Activated CD8-positive, alpha-beta memory T cell treated with anti-CD3 and anti-CD28 coated beads, Interleukin-2, amount 10 ng/mL, durations not matched to agents 7 days and 5 days (primary cell): ENCODE measurements at regions of chr14 and their contacts with region 1.

Region 1: DNA sequence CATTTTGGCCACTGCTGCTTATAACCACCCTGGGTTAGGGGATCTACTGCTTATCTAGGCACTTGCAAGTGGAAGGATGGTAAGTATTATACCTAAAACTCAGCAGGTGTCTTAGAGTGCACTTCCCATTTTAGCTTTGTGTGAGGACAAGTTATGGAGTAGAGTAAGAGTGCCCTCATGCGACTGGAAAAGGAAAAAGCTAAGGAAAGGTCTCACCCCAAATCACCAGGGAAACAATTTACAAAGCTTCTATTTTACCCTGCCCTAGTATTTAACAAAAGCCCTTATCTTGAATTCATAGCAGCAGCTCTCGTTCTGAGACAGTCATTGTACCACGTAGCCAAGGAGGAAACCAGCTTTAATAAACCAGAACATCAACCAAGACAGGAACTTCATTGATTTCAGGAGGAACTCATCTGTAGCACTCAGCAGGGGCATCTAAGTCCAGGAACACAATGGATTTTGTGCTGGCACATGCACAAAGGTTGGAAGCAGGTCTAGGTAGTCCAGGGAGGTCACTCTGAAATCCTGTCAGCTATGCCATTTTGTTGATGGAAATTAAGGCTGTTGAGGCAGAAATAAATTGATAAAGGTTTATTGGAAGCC is 2.9 kb downstream of the RDH12 start:
- DNase-seq: no peak
- ATAC-seq: peak; percentile 85
- H3K4me3 Mint-ChIP-seq: no peak overlapping the region
- H3K27ac Mint-ChIP-seq: no peak overlapping the region
- H3K4me1 Mint-ChIP-seq: peaks cover 3% of the 10 kb centered on the region
- H3K27me3 Mint-ChIP-seq: peaks cover 4% of the 10 kb centered on the region

Region 2: GRCh38 chr14:67426983-67427606 is 277.5 kb before region 1 on chr14:
- CTCF ChIA-PET with region 1: interaction called, 33 read pairs
- DNase-seq: peak; percentile 80
- ATAC-seq: peak; percentile 89
- H3K4me3 Mint-ChIP-seq: no peak overlapping the region
- H3K27ac Mint-ChIP-seq: no peak overlapping the region
- H3K4me1 Mint-ChIP-seq: peaks cover 9% of the 10 kb centered on the region
- H3K27me3 Mint-ChIP-seq: peaks cover 34% of the 10 kb centered on the region

Region 3: DNA sequence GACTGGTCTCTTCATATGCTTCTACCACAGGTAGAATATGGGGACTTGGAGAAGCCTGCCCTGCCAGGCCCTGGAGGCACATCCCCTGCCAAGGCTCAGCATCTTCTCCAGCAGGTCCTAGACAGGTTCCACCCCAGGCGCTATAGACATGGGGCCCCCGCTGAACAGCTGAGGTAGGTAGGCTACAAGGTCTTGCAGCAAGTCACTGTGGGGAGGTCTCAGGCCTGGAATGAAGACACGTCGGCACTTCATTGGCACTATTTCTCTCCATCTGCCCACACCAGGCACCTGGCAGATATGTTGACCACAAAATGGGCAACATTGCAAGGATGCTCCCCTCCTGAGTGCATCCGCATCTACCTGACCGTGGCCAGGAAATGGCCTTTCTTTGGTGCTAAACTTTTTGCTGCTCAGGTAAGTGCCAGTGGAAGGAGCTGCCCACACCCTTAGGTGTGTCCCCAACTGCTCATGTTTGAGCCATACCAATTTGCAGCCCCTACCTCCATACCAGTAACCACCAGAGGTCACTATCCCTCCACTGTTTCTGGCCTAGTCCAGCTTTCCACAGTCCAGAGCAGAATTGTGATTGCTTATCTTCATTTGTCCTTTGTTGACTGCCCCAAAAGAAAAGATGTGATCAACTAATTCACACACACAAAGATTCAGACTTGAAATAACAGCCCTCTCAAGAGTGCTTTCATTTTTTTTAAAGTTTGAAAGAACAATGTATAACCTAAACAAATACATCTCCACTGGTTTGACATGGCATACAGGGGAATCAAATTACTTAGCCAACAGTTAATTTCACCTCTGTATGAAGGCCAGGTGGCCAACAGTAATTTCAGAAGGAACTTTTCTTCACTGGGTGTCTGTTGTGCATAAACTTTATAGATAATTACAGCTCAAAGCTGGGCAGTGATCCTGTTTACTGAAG is 120.6 kb before region 1 on chr14:
- CTCF ChIA-PET with region 1: interaction called, 42 read pairs
- DNase-seq: peak; percentile 50
- ATAC-seq: peak; percentile 78
- H3K4me3 Mint-ChIP-seq: no peak overlapping the region
- H3K27ac Mint-ChIP-seq: no peak overlapping the region
- H3K4me1 Mint-ChIP-seq: peaks cover 12% of the 10 kb centered on the region
- H3K27me3 Mint-ChIP-seq: no peaks in the 10 kb centered on the region

Region 4: GRCh38 chr14:67619446-67620216 is 85.0 kb before region 1 on chr14 and contains the start of gene ARG2:
- CTCF ChIA-PET with region 1: interaction called, 78 read pairs
- DNase-seq: peak; percentile 98
- ATAC-seq: peak; percentile 92
- H3K4me3 Mint-ChIP-seq: peak within 1 kb of the TSS; percentile 81
- H3K27ac Mint-ChIP-seq: peak within 1 kb of the TSS; percentile 82
- H3K4me1 Mint-ChIP-seq: peaks cover 34% of the 10 kb centered on the region
- H3K27me3 Mint-ChIP-seq: peaks cover 18% of the 10 kb centered on the region
- total RNA-seq, gene ARG2: 6.2 to 13.6 TPM

Region 5: GRCh38 chr14:67674481-67675169 is 30.0 kb before region 1 on chr14 and contains the start of gene VTI1B:
- CTCF ChIA-PET with region 1: interaction called, 28 read pairs
- DNase-seq: peak; percentile 80
- ATAC-seq: peak; percentile 92
- H3K4me3 Mint-ChIP-seq: peak within 1 kb of the TSS; percentile 90
- H3K27ac Mint-ChIP-seq: peak within 1 kb of the TSS; percentile 83
- H3K4me1 Mint-ChIP-seq: peaks cover 33% of the 10 kb centered on the region
- H3K27me3 Mint-ChIP-seq: no peaks in the 10 kb centered on the region
- total RNA-seq, gene VTI1B: 69.2 to 73.5 TPM

Region 6: DNA sequence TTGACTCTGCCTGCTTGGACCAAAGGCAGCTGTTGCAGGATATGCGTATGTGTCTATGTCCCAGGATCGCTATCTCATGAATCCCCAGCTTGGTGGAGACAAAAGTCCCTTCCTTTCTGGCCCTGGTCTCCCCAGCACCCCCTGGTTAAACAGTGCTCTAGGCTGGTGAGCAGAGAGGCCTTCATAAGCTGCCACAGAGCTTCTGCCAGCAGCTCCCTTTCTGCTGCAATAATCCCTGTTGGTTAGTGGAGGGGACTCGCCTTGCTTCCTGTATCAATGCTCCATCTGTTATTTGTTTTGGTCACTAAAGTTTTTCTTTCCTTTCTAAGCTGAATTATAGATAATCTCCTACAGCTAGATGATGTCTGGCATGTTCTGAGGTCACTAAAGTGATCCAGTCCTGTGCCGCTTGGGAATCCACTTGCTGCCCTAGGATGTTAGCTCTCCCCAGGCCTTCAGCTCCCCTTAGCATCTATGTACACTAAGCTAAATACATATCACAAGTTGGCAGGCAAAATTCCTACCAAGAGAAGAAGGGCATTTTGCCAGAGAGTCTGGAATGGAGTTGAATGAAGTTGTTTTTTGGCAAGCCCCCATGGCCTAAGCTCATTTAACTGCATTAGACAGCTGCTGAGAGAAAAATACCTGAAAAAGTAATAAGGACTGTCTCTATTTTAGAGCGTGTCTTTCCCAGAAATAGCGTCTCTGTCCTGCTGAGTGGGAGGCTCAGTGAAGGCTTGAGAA is 44.9 kb after region 1 on chr14:
- CTCF ChIA-PET with region 1: no interaction called
- DNase-seq: no peak
- ATAC-seq: no peak
- H3K4me3 Mint-ChIP-seq: no peak overlapping the region
- H3K27ac Mint-ChIP-seq: no peak overlapping the region
- H3K4me1 Mint-ChIP-seq: peaks cover 10% of the 10 kb centered on the region
- H3K27me3 Mint-ChIP-seq: no peaks in the 10 kb centered on the region